ENCODE measurements at regions of chr13 and their contacts with region 1.

Region 1: GRCh38 chr13:36282818-36283445 is 14.7 kb downstream of the CCDC169 start:
- DNase-seq: no peak
- ATAC-seq: no peak
- H3K4me3 Mint-ChIP-seq: no peak overlapping the region
- H3K27ac Mint-ChIP-seq: no peak overlapping the region
- H3K4me1 Mint-ChIP-seq: no peaks in the 10 kb centered on the region
- H3K27me3 Mint-ChIP-seq: no peaks in the 10 kb centered on the region
- CTCF ChIP-seq: no peak

Region 2: GRCh38 chr13:34733736-34734135 is 1549.2 kb before region 1 on chr13:
- CTCF ChIA-PET with region 1: no interaction called
- POLR2A ChIA-PET with region 1: no interaction called
- intact Hi-C with region 1: no loop called
- DNase-seq: no peak
- ATAC-seq: no peak
- H3K4me3 Mint-ChIP-seq: no peak overlapping the region
- H3K27ac Mint-ChIP-seq: no peak overlapping the region
- H3K4me1 Mint-ChIP-seq: no peaks in the 10 kb centered on the region
- H3K27me3 Mint-ChIP-seq: no peaks in the 10 kb centered on the region
- CTCF ChIP-seq: no peak

Region 3: GRCh38 chr13:36395280-36395679 is 112.3 kb after region 1 on chr13:
- CTCF ChIA-PET with region 1: interaction called, 5 read pairs
- POLR2A ChIA-PET with region 1: no interaction called
- intact Hi-C with region 1: loop called (anchors 1 kb)
- DNase-seq: no peak
- ATAC-seq: no peak
- H3K4me3 Mint-ChIP-seq: no peak overlapping the region
- H3K27ac Mint-ChIP-seq: no peak overlapping the region
- H3K4me1 Mint-ChIP-seq: no peaks in the 10 kb centered on the region
- H3K27me3 Mint-ChIP-seq: no peaks in the 10 kb centered on the region
- CTCF ChIP-seq: no peak

Region 4: GRCh38 chr13:36736119-36736726 is 453.3 kb after region 1 on chr13:
- CTCF ChIA-PET with region 1: interaction called, 5 read pairs
- POLR2A ChIA-PET with region 1: no interaction called
- intact Hi-C with region 1: loop called (anchors 1 kb)
- DNase-seq: no peak
- ATAC-seq: no peak
- H3K4me3 Mint-ChIP-seq: no peak overlapping the region
- H3K27ac Mint-ChIP-seq: no peak overlapping the region
- H3K4me1 Mint-ChIP-seq: no peaks in the 10 kb centered on the region
- H3K27me3 Mint-ChIP-seq: no peaks in the 10 kb centered on the region
- CTCF ChIP-seq: peak; percentile 71

Region 5: GRCh38 chr13:36858290-36858689 is 575.4 kb after region 1 on chr13:
- CTCF ChIA-PET with region 1: no interaction called
- POLR2A ChIA-PET with region 1: no interaction called
- intact Hi-C with region 1: no loop called
- DNase-seq: no peak
- ATAC-seq: no peak
- H3K4me3 Mint-ChIP-seq: no peak overlapping the region
- H3K27ac Mint-ChIP-seq: no peak overlapping the region
- H3K4me1 Mint-ChIP-seq: no peaks in the 10 kb centered on the region
- H3K27me3 Mint-ChIP-seq: peaks cover 11% of the 10 kb centered on the region
- CTCF ChIP-seq: no peak

Measured in activated B cell treated with CpG ODN at 0.5 μM for 24 hours (primary cell).